Natural killer cell (primary cell): ENCODE measurements at regions of chr22 and their contacts with region 1.

Region 1: GRCh38 chr22:40128989-40129388 is 48.7 kb upstream of the TNRC6B start:
- DNase-seq: peak; percentile 39 to 51
- ATAC-seq: peak; percentile 89 to 95 (median 94)
- H3K4me3 ChIP-seq: no peak overlapping the region
- H3K4me3 Mint-ChIP-seq: peak overlapping the region; percentile 66
- H3K27ac ChIP-seq: peak overlapping the region; percentile 44
- H3K27ac Mint-ChIP-seq: peak overlapping the region; percentile 65 to 86
- H3K4me1 ChIP-seq: peaks cover 22% of the 10 kb centered on the region
- H3K4me1 Mint-ChIP-seq: peaks cover 31 to 45% of the 10 kb centered on the region in 2 donors
- H3K27me3 ChIP-seq: no peaks in the 10 kb centered on the region
- H3K27me3 Mint-ChIP-seq: no peaks in the 10 kb centered on the region
- CTCF ChIP-seq: no peak

Region 2: DNA sequence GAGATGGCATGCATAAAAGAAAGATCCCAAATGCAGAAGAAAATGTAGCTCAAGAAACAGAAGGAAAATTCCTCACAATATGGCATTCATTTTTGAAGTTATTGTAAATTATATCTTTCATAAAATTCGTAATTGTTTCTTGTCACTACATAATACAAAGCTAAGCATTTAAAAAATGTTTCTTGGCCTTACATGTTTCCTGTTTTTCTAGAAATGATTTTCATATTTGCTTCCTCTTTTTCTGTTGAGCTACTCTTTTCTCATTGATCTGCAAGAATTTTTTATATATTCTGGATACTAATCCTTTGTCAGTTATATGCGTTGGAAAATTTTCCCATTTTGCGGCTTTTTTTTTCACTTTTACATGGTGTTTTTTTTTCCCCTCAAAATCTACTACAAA is 283.5 kb before region 1 on chr22:
- intact Hi-C with region 1: no loop called
- DNase-seq: no peak
- ATAC-seq: no peak
- H3K4me3 ChIP-seq: no peak overlapping the region
- H3K4me3 Mint-ChIP-seq: no peak overlapping the region
- H3K27ac ChIP-seq: no peak overlapping the region
- H3K27ac Mint-ChIP-seq: no peak overlapping the region
- H3K4me1 ChIP-seq: no peaks in the 10 kb centered on the region
- H3K4me1 Mint-ChIP-seq: no peaks in the 10 kb centered on the region
- H3K27me3 ChIP-seq: no peaks in the 10 kb centered on the region
- H3K27me3 Mint-ChIP-seq: peaks cover 0 to 5% of the 10 kb centered on the region in 2 donors
- CTCF ChIP-seq: no peak

Region 3: GRCh38 chr22:40084246-40084645 is 44.7 kb before region 1 on chr22:
- intact Hi-C with region 1: loop called (anchors 5 kb)
- DNase-seq: no peak
- ATAC-seq: no peak
- H3K4me3 ChIP-seq: no peak overlapping the region
- H3K4me3 Mint-ChIP-seq: no peak overlapping the region
- H3K27ac ChIP-seq: no peak overlapping the region
- H3K27ac Mint-ChIP-seq: no peak overlapping the region
- H3K4me1 ChIP-seq: peaks cover 17% of the 10 kb centered on the region
- H3K4me1 Mint-ChIP-seq: peaks cover 15 to 24% of the 10 kb centered on the region in 2 donors
- H3K27me3 ChIP-seq: no peaks in the 10 kb centered on the region
- H3K27me3 Mint-ChIP-seq: no peaks in the 10 kb centered on the region
- CTCF ChIP-seq: no peak

Region 4: DNA sequence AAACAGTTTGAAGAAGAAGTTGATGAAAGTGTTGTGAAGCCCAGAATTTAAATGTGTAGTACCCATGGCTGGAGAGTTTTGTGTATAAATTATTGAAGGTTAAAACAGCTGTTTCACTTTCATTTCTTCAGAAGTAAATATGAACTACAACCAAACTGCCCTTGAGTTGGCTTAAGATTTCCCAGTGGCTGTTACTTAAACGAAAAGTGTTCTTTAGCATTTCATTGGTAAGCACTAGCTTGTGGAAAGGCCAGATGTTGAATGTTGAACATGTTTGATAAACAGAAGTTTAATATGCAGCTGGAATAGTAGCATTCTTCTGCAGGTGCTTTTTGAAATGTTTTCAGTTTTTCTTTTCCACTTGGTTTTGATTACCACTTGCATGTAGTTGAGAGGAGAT is 34.5 kb before region 1 on chr22:
- intact Hi-C with region 1: no loop called
- DNase-seq: peak in 1 of 2 donors; percentile 35
- ATAC-seq: peak; percentile 61 to 75 (median 63)
- H3K4me3 ChIP-seq: no peak overlapping the region
- H3K4me3 Mint-ChIP-seq: peak overlapping the region; percentile 78
- H3K27ac ChIP-seq: peak overlapping the region; percentile 46
- H3K27ac Mint-ChIP-seq: peak overlapping the region; percentile 64 to 70
- H3K4me1 ChIP-seq: peaks cover 3% of the 10 kb centered on the region
- H3K4me1 Mint-ChIP-seq: peaks cover 52 to 65% of the 10 kb centered on the region in 2 donors
- H3K27me3 ChIP-seq: no peaks in the 10 kb centered on the region
- H3K27me3 Mint-ChIP-seq: no peaks in the 10 kb centered on the region
- CTCF ChIP-seq: no peak